CD8-positive, alpha-beta T cell (primary cell): ENCODE measurements at regions of chr16 and their contacts with region 1.

Region 1: DNA sequence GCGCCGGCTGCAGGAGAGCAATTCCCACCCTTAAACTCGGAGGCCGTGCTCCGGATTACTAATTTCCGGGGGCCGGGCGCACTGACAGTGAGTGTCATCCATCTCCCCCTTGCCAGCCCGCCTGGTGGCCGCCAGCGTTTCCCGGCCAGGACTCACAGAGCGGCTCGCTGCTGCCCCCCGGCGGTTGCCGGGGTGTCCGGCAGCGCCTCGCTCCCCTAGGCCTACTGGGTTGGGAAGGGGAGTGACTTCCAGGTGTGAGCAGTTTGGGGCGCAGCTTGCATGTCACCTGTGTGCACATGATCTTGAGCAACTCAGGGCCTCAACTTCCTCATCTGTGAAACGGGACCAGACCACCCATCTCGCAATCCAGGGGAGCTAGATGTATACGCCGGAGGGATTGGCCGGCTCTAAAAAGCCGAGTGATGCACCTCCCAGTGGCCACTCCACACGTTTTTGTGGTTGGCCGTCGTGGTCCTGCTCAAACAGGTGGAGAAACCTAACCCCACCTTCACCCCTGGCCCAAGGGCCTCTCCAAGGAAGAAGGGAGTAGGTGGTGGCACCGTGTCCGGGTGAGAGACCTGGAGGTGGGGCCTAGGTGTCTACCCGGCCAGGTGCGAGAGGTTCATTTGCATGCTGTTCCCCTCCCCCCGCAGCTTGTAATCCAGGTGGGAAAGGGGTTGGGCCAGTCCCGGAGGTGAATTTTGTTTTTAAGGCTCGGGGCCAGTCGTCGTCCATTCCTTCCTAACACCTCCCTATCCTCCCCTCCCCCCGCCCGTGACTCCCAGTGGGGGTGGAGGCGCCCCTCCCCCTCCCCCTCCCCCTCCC is 2.4 kb upstream of the GSE1 start:
- DNase-seq: peak; percentile 77 to 95 (median 89)
- ATAC-seq: peak; percentile 62
- H3K4me3 ChIP-seq: peak overlapping the region; percentile 26 to 28
- H3K4me3 Mint-ChIP-seq: peak overlapping the region; percentile 82
- H3K27ac ChIP-seq: peak overlapping the region in 1 of 2 experiments; percentile 49
- H3K27ac Mint-ChIP-seq: peak overlapping the region; percentile 70
- H3K4me1 ChIP-seq: peaks cover 44% of the 10 kb centered on the region
- H3K4me1 Mint-ChIP-seq: peaks cover 46% of the 10 kb centered on the region
- H3K27me3 ChIP-seq: no peaks in the 10 kb centered on the region
- H3K27me3 Mint-ChIP-seq: no peaks in the 10 kb centered on the region
- CTCF ChIP-seq: peak; percentile 94

Region 2: GRCh38 chr16:85305996-85306792 is 304.5 kb before region 1 on chr16:
- CTCF ChIA-PET with region 1: interaction called, 15 read pairs
- POLR2A ChIA-PET with region 1: interaction called, 3 read pairs
- intact Hi-C with region 1: loop called (anchors 2 kb)
- DNase-seq: peak; percentile 54 to 89 (median 82)
- ATAC-seq: peak; percentile 87
- H3K4me3 ChIP-seq: no peak overlapping the region
- H3K4me3 Mint-ChIP-seq: peak overlapping the region; percentile 44
- H3K27ac ChIP-seq: peak overlapping the region in 1 of 2 experiments; percentile 31
- H3K27ac Mint-ChIP-seq: peak overlapping the region; percentile 95
- H3K4me1 ChIP-seq: peaks cover 80% of the 10 kb centered on the region
- H3K4me1 Mint-ChIP-seq: peaks cover 58% of the 10 kb centered on the region
- H3K27me3 ChIP-seq: peaks cover 0 to 6% of the 10 kb centered on the region in 2 experiments
- H3K27me3 Mint-ChIP-seq: no peaks in the 10 kb centered on the region
- CTCF ChIP-seq: no peak

Region 3: GRCh38 chr16:85393674-85394483 is 216.8 kb before region 1 on chr16:
- CTCF ChIA-PET with region 1: interaction called, 9 read pairs
- POLR2A ChIA-PET with region 1: no interaction called
- intact Hi-C with region 1: loop called (anchors 1 kb)
- DNase-seq: peak; percentile 45 to 83 (median 69)
- ATAC-seq: peak; percentile 84
- H3K4me3 ChIP-seq: no peak overlapping the region
- H3K4me3 Mint-ChIP-seq: no peak overlapping the region
- H3K27ac ChIP-seq: no peak overlapping the region
- H3K27ac Mint-ChIP-seq: no peak overlapping the region
- H3K4me1 ChIP-seq: no peaks in the 10 kb centered on the region
- H3K4me1 Mint-ChIP-seq: no peaks in the 10 kb centered on the region
- H3K27me3 ChIP-seq: no peaks in the 10 kb centered on the region
- H3K27me3 Mint-ChIP-seq: peaks cover 3% of the 10 kb centered on the region
- CTCF ChIP-seq: peak; percentile 72

Region 4: DNA sequence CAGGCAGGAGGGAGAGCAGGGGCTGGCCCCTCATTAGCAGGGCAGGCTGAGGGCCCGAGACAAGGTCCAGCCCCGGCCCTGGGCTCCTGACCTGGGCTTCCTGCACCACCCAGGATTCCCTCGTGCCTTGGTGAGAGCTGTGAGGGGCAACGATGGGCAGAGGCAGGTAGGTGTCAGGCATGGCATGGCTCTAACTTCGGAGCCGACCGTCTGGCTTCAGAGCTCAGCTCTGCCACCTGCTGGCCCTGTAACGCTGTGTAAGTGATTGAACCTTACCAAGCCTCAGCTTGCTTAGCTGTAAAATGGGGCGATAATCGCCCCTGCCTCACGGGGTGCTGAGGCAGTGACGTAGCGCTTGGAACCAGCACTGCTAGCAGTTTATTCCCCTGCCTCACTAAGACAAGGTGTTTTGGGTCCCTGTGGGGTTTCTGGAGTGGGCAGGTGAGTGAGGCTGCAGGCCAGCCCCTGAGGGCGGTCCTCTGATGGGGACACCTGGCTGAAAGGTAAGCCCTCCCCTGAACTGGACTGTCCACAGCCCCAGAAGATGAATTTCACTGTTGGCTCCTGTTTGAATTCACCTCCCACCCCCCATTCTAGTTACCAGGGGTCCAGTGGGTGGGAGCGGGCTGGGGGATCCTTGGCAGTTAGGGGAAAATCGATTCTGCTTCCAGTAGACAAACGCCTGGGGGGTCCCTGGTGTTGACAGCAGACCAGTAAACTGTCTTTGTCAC is 182.4 kb before region 1 on chr16:
- CTCF ChIA-PET with region 1: interaction called, 100 read pairs
- POLR2A ChIA-PET with region 1: no interaction called
- intact Hi-C with region 1: no loop called
- DNase-seq: peak in 8 of 9 experiments; percentile 29 to 66 (median 53)
- ATAC-seq: peak; percentile 83
- H3K4me3 ChIP-seq: no peak overlapping the region
- H3K4me3 Mint-ChIP-seq: no peak overlapping the region
- H3K27ac ChIP-seq: no peak overlapping the region
- H3K27ac Mint-ChIP-seq: no peak overlapping the region
- H3K4me1 ChIP-seq: no peaks in the 10 kb centered on the region
- H3K4me1 Mint-ChIP-seq: no peaks in the 10 kb centered on the region
- H3K27me3 ChIP-seq: no peaks in the 10 kb centered on the region
- H3K27me3 Mint-ChIP-seq: peaks cover 2% of the 10 kb centered on the region
- CTCF ChIP-seq: peak; percentile 40

Region 5: GRCh38 chr16:85479972-85480751 is 130.6 kb before region 1 on chr16:
- CTCF ChIA-PET with region 1: interaction called, 17 read pairs
- POLR2A ChIA-PET with region 1: no interaction called
- intact Hi-C with region 1: loop called (anchors 1 kb)
- DNase-seq: peak in 4 of 9 experiments; percentile 19 to 45 (median 30)
- ATAC-seq: no peak
- H3K4me3 ChIP-seq: no peak overlapping the region
- H3K4me3 Mint-ChIP-seq: no peak overlapping the region
- H3K27ac ChIP-seq: no peak overlapping the region
- H3K27ac Mint-ChIP-seq: no peak overlapping the region
- H3K4me1 ChIP-seq: no peaks in the 10 kb centered on the region
- H3K4me1 Mint-ChIP-seq: no peaks in the 10 kb centered on the region
- H3K27me3 ChIP-seq: no peaks in the 10 kb centered on the region
- H3K27me3 Mint-ChIP-seq: no peaks in the 10 kb centered on the region
- CTCF ChIP-seq: no peak

Region 6: GRCh38 chr16:85528528-85529387 is 82.0 kb before region 1 on chr16:
- CTCF ChIA-PET with region 1: interaction called, 7 read pairs
- POLR2A ChIA-PET with region 1: interaction called, 3 read pairs
- intact Hi-C with region 1: loop called in 1 of 2 experiments (anchors 1 kb)
- DNase-seq: peak in 5 of 9 experiments; percentile 7 to 59 (median 31)
- ATAC-seq: peak; percentile 52
- H3K4me3 ChIP-seq: no peak overlapping the region
- H3K4me3 Mint-ChIP-seq: no peak overlapping the region
- H3K27ac ChIP-seq: no peak overlapping the region
- H3K27ac Mint-ChIP-seq: no peak overlapping the region
- H3K4me1 ChIP-seq: no peaks in the 10 kb centered on the region
- H3K4me1 Mint-ChIP-seq: no peaks in the 10 kb centered on the region
- H3K27me3 ChIP-seq: no peaks in the 10 kb centered on the region
- H3K27me3 Mint-ChIP-seq: no peaks in the 10 kb centered on the region
- CTCF ChIP-seq: peak; percentile 44

Region 7: GRCh38 chr16:85569615-85570212 is 41.0 kb before region 1 on chr16:
- CTCF ChIA-PET with region 1: interaction called, 7 read pairs
- POLR2A ChIA-PET with region 1: no interaction called
- intact Hi-C with region 1: loop called in 1 of 2 experiments (anchors 5 kb)
- DNase-seq: peak in 7 of 9 experiments; percentile 29 to 82 (median 65)
- ATAC-seq: peak; percentile 59
- H3K4me3 ChIP-seq: peak overlapping the region; percentile 39 to 40
- H3K4me3 Mint-ChIP-seq: peak overlapping the region; percentile 75
- H3K27ac ChIP-seq: peak overlapping the region; percentile 34 to 82
- H3K27ac Mint-ChIP-seq: peak overlapping the region; percentile 89
- H3K4me1 ChIP-seq: peaks cover 56% of the 10 kb centered on the region
- H3K4me1 Mint-ChIP-seq: peaks cover 69% of the 10 kb centered on the region
- H3K27me3 ChIP-seq: no peaks in the 10 kb centered on the region
- H3K27me3 Mint-ChIP-seq: no peaks in the 10 kb centered on the region
- CTCF ChIP-seq: no peak